Activated naive CD4-positive, alpha-beta T cell treated with anti-CD3 and anti-CD28 coated beads for 36 hours (primary cell): ENCODE measurements at regions of chr14 and their contacts with region 1.

Region 1: DNA sequence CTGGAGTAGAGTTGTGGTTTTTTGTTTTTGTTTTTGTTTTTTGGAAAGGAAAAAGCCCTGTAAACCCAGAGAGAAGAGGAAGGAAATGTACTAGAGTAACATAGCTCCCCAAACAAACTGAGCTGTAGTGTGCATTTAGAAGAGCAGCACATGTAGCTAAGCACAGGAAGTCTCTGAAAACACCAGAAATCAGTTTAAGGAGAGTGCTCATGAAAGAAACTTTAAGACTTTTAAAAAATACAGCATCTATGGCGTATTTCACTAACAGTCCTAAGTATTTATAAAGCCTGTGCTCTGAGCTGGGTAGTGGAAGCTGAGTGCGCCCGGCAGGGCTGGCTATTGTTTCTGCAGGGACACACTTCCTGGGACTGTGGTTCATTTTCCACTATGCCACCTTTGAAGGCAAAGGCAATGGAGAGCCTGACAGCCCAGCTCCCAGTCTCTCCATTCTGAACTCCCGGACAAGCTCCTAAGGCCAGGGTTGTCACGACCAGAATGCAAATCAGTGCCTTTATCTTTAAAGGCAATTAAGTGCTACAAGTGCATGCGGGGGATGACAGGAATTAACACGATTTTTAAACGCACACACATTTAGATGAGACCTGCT is 45.4 kb downstream of the NIN start:
- DNase-seq: no peak
- H3K4me3 Mint-ChIP-seq: no peak overlapping the region
- H3K27ac Mint-ChIP-seq: no peak overlapping the region
- H3K4me1 Mint-ChIP-seq: peaks cover 66% of the 10 kb centered on the region
- H3K27me3 Mint-ChIP-seq: no peaks in the 10 kb centered on the region

Region 2: GRCh38 chr14:50363714-50364111 is 421.8 kb before region 1 on chr14:
- CTCF ChIA-PET with region 1: no interaction called
- intact Hi-C with region 1: loop called (anchors 5 kb)
- DNase-seq: peak; percentile 74
- H3K4me3 Mint-ChIP-seq: peak overlapping the region; percentile 73
- H3K27ac Mint-ChIP-seq: peak overlapping the region; percentile 84
- H3K4me1 Mint-ChIP-seq: peaks cover 18% of the 10 kb centered on the region
- H3K27me3 Mint-ChIP-seq: no peaks in the 10 kb centered on the region

Region 3: GRCh38 chr14:50762001-50762930 is 23.3 kb before region 1 on chr14:
- CTCF ChIA-PET with region 1: no interaction called
- intact Hi-C with region 1: loop called (anchors 1 kb)
- DNase-seq: peak; percentile 74
- H3K4me3 Mint-ChIP-seq: no peak overlapping the region
- H3K27ac Mint-ChIP-seq: no peak overlapping the region
- H3K4me1 Mint-ChIP-seq: peaks cover 28% of the 10 kb centered on the region
- H3K27me3 Mint-ChIP-seq: no peaks in the 10 kb centered on the region

Region 4: DNA sequence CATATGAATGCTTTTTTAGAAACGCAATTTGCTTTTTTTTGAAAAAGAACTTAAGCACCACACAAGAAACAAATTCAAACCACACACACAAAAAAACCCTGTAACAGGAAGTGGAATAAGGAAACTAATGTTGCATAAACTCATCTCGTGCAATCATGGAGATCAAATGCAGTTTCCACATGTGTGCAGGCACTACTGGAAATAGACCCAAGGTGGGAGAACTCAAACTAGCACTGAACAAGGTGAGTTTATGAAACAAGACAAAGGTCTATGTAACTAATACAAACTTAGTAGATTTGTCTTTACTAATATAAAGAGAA is 27.9 kb after region 1 on chr14:
- CTCF ChIA-PET with region 1: interaction called, 3 read pairs
- intact Hi-C with region 1: loop called (anchors 1 kb)
- DNase-seq: peak; percentile 45
- H3K4me3 Mint-ChIP-seq: peak overlapping the region; percentile 75
- H3K27ac Mint-ChIP-seq: peak overlapping the region; percentile 98
- H3K4me1 Mint-ChIP-seq: peaks cover 55% of the 10 kb centered on the region
- H3K27me3 Mint-ChIP-seq: no peaks in the 10 kb centered on the region

Region 5: GRCh38 chr14:50823051-50823761 is 37.6 kb after region 1 on chr14:
- CTCF ChIA-PET with region 1: interaction called, 13 read pairs
- intact Hi-C with region 1: loop called (anchors 1 kb)
- DNase-seq: peak; percentile 30
- H3K4me3 Mint-ChIP-seq: peak overlapping the region; percentile 59
- H3K27ac Mint-ChIP-seq: peak overlapping the region; percentile 73
- H3K4me1 Mint-ChIP-seq: peaks cover 89% of the 10 kb centered on the region
- H3K27me3 Mint-ChIP-seq: no peaks in the 10 kb centered on the region

Region 6: DNA sequence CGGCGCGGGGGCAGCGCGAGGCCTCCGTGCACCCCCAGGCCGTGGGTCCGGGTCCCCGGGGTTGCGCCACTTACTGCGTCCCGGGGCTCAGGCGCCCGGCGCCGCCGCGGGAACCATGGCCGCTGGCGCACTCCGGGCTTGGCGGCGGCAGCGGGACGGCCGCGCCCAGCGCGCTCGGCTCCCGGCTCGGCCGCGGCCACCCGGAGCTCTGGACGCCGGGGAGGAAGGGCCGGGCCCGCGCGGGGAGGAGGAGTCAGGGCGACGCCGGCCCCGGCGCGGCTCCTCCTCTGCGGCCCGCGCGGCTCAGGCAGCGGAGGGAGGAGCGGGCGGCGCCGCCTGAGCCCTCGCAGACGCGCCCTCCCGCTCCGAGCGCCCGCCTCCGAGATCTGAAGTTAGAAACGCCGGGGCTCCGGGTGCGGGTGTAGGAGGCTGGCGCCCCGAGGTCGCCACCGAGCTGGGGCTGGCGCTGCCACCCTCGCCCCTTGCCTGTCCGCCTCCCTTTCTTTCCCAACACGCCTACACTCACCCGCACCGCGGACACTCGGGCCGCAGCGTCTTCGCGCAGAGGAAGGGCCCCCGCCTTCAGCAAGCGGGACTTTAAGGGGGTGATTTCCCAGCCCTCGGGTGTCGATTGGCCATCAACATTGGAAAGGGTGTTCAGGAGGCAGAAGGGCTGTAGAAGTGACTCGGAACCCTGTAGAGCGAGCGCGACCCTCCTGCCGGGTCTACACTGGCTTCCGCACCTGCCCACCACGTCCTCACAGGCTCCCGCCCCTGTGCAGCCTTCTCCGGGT is 45.6 kb after region 1 on chr14 and contains the start of gene NIN:
- CTCF ChIA-PET with region 1: interaction called, 10 read pairs
- intact Hi-C with region 1: loop called (anchors 1 kb)
- DNase-seq: peak; percentile 69
- H3K4me3 Mint-ChIP-seq: peak within 1 kb of the TSS; percentile 88
- H3K27ac Mint-ChIP-seq: peak within 1 kb of the TSS; percentile 83
- H3K4me1 Mint-ChIP-seq: peaks cover 62% of the 10 kb centered on the region
- H3K27me3 Mint-ChIP-seq: no peaks in the 10 kb centered on the region
- total RNA-seq, gene NIN: 56.9 to 57.9 TPM

Region 7: DNA sequence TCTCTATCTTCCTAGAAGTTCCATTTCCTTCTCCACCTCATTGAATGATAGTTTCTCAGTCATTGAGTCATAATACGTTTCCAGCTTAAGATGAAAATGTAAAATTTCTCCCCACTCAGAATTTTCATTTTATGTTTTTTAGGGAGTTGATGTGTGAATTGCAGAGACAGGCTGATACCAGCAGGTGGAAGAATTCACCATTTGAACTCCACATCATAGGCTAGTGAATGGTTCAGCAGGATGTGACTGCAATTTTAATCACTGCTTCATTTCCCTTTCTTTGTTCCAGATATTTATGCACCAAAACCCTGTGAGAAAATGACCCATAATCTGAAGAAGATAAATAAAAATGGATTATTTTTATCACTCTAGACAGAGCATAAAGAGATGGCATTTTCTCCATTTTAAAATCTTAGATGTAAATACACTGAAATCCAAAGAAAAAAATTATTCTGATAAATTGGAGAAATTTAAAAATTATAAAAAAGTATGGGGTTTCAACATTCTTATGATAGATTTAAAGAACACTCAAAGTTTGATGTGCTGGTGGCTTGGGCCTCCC is 169.3 kb after region 1 on chr14:
- CTCF ChIA-PET with region 1: no interaction called
- intact Hi-C with region 1: loop called (anchors 2 kb)
- DNase-seq: no peak
- H3K4me3 Mint-ChIP-seq: no peak overlapping the region
- H3K27ac Mint-ChIP-seq: no peak overlapping the region
- H3K4me1 Mint-ChIP-seq: peaks cover 6% of the 10 kb centered on the region
- H3K27me3 Mint-ChIP-seq: no peaks in the 10 kb centered on the region